Lower leg skin (tissue), 4 donors: ENCODE measurements at regions of chr1 and their contacts with region 1.

Region 1: DNA sequence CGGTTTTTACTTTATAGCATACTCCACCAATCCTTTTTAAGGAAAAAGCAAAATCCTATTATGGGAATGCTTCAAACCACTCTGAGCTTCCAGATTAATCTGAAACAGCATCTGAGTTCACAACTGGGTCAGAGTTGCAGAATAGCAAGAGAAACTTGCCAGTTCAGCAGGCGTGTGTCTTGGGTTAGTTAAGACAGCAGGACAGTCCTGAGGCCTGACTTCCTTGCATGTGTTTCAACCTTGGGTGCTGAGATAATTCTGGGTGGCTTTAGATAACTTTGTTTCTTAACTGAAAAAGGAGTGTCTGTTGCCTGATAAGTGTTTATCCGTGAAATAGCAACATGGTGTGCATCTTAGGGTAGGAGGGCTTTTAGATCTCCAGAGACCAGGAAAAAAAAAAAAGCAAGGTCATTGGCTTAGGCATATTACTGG is 169.2 kb downstream of the DHRS3 start:
- DNase-seq: no peak
- H3K4me3 ChIP-seq: no peak overlapping the region
- CTCF ChIP-seq: no peak
- POLR2A ChIP-seq: no peak

Region 2: DNA sequence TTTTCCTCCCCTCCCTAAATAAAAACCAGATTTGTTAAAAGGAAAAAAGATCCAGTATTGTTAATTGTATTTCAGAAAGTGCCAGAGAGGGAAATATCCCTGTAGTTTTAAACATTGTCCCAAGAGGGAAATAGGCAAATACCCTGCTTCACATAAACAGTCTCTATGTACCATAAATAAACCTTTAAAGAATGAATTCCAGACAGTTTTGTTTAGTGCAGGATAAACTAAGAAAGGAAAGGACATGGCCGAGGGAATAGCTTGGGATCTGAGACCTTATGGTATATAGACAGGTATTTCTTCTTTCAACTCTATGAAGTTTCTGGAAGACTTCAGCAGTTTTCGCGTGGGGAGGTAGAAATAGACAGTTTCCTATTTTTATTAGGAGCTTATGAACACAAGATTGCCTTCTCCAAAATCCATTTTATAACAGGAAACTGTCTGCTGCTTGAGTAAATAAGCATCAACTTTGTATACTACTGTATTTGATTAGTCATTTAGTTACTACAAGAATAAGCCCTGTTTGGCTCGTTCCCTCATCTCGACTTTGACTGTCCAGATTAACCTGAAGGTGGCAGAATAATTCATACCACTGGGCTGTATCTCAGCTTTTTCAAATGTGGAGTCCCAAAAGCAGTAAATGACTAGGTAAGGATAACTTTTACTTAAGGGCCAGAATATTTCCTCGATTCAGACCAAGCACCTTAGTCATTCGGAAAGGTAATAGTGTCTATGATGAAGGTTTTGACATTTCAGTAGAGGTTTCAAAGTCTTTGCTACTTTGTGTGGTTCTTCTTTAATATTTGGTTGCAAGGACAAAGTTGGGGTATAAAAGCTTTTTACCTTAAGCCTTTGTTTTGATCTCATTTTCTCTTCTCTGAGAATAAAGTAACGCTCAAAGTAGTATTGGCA is 41.5 kb before region 1 on chr1:
- intact Hi-C with region 1: loop called (anchors 2 kb)
- DNase-seq: no peak
- H3K4me3 ChIP-seq: no peak overlapping the region
- CTCF ChIP-seq: no peak
- POLR2A ChIP-seq: no peak